ENCODE measurements at regions of chr12 and their contacts with region 1.

Region 1: DNA sequence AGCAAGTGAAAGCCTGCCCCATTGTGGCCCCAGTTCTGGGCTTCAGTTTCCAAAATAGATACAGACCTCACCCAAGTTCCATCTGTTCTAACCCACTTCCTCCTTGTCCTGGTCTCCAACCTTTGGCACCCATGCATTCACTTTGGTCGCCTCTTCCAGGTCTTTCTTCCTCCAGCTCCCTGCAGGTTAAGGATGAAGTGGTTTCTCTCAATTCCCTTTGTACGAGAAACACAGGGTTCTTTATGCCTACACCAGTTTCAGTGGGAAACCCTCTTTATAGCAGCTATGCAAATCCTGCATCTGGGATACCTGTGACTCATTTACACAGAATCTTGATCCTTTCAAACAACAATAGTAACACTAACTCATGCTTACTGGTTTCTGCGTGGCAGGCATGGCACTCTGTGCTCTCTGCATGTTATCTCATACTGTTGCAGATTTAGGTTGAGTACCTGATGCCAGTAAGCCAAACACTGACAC is 110.6 kb upstream of the AMIGO2 start:
- DNase-seq: peak; percentile 63
- H3K4me3 Mint-ChIP-seq: peak overlapping the region; percentile 17
- H3K27ac Mint-ChIP-seq: peak overlapping the region; percentile 80
- H3K4me1 Mint-ChIP-seq: peaks cover 82% of the 10 kb centered on the region
- H3K27me3 Mint-ChIP-seq: no peaks in the 10 kb centered on the region

Region 2: GRCh38 chr12:47079468-47079980 is 110.8 kb before region 1 on chr12 and contains the starts of genes AMIGO2 and PCED1B:
- CTCF ChIA-PET with region 1: interaction called, 7 read pairs
- POLR2A ChIA-PET with region 1: interaction called, 4 read pairs
- intact Hi-C with region 1: loop called (anchors 1 kb)
- DNase-seq: peak; percentile 83
- H3K4me3 Mint-ChIP-seq: peak within 1 kb of the TSS; percentile 99
- H3K27ac Mint-ChIP-seq: peak within 1 kb of the TSS; percentile 92
- H3K4me1 Mint-ChIP-seq: peaks cover 72% of the 10 kb centered on the region
- H3K27me3 Mint-ChIP-seq: no peaks in the 10 kb centered on the region
- total RNA-seq, gene AMIGO2: 12.4 to 13.6 TPM
- total RNA-seq, gene PCED1B: 133 to 136 TPM

Region 3: DNA sequence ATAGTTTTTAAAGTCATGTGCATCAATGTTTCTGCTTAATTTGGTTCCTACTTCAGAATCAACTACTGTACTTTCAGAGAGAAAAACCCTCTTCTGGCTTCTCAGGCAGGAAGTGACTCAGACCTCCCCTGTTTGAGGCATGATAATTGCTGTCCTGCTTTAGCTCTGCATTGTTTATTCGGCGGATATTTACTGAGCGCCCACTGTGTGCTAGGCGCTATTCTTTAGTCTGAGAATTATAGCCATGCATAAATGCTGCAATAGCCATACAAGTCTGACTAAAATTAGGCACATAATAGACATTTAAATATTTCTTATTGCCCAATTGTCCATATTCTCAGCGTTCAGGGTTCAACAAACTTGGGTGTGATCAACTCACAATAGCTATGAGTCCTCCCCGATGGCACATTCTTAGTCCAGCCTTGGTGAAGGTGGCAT is 104.5 kb before region 1 on chr12:
- CTCF ChIA-PET with region 1: no interaction called
- POLR2A ChIA-PET with region 1: interaction called, 3 read pairs
- intact Hi-C with region 1: loop called (anchors 2 kb)
- DNase-seq: peak; percentile 59
- H3K4me3 Mint-ChIP-seq: peak overlapping the region; percentile 47
- H3K27ac Mint-ChIP-seq: peak overlapping the region; percentile 69
- H3K4me1 Mint-ChIP-seq: peaks cover 51% of the 10 kb centered on the region
- H3K27me3 Mint-ChIP-seq: no peaks in the 10 kb centered on the region

Region 4: GRCh38 chr12:47111392-47111778 is 78.9 kb before region 1 on chr12:
- CTCF ChIA-PET with region 1: no interaction called
- POLR2A ChIA-PET with region 1: no interaction called
- intact Hi-C with region 1: loop called (anchors 5 kb)
- DNase-seq: peak; percentile 56
- H3K4me3 Mint-ChIP-seq: no peak overlapping the region
- H3K27ac Mint-ChIP-seq: no peak overlapping the region
- H3K4me1 Mint-ChIP-seq: peaks cover 38% of the 10 kb centered on the region
- H3K27me3 Mint-ChIP-seq: no peaks in the 10 kb centered on the region

Region 5: DNA sequence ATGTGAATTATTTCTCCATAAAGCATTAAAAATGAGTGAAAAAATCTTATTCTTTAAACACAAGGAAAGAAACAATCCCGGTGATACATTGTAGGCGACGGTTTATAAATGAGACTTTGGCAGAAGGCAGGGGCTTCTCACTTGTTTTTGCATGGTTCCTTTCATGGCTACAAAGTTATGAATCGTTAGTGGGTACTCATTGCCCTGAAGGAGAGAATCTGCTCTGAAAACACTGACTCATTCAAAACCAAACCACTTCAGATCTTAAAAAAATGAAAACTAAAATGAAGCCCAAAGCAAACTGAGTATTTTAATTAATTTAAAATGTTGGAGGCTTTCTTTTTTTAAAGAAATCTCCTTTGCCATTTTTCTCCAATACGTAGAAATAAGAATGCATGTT is 69.2 kb before region 1 on chr12:
- CTCF ChIA-PET with region 1: no interaction called
- POLR2A ChIA-PET with region 1: no interaction called
- intact Hi-C with region 1: loop called (anchors 2 kb)
- DNase-seq: no peak
- H3K4me3 Mint-ChIP-seq: no peak overlapping the region
- H3K27ac Mint-ChIP-seq: peak overlapping the region; percentile 94
- H3K4me1 Mint-ChIP-seq: peaks cover 35% of the 10 kb centered on the region
- H3K27me3 Mint-ChIP-seq: no peaks in the 10 kb centered on the region

Region 6: DNA sequence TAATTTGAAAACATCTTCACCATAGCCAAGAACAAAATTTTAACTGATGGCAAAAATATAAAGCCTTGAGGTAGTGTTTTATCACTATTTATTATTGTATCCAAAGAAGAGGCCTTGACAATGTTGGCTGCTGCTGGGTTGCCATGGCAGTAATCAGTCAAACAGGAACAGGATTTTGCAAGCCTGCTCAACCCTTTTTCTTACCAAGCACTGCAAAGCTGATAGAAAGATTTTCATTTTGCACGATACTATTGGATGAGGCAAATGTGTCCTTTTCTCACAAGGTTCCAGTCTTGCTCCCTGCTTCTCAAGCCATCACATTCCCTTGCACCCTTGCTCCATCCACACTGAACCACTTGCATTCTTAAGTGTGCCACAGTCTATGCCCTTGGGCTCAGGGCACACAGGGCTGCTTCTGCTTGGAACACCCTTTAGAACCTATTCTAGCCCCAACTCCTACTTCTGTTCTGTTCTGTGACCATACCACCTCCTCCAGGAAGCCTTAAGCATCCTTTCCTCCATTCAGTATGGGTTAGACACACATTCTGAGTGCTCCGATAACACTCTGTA is 34.1 kb before region 1 on chr12:
- CTCF ChIA-PET with region 1: interaction called, 3 read pairs
- POLR2A ChIA-PET with region 1: no interaction called
- intact Hi-C with region 1: loop called (anchors 5 kb)
- DNase-seq: no peak
- H3K4me3 Mint-ChIP-seq: no peak overlapping the region
- H3K27ac Mint-ChIP-seq: peak overlapping the region; percentile 44
- H3K4me1 Mint-ChIP-seq: peaks cover 40% of the 10 kb centered on the region
- H3K27me3 Mint-ChIP-seq: no peaks in the 10 kb centered on the region

Region 7: GRCh38 chr12:47207340-47207717 is 17.0 kb after region 1 on chr12:
- CTCF ChIA-PET with region 1: interaction called, 12 read pairs
- POLR2A ChIA-PET with region 1: interaction called, 8 read pairs
- intact Hi-C with region 1: loop called (anchors 1 kb)
- DNase-seq: peak; percentile 75
- H3K4me3 Mint-ChIP-seq: peak overlapping the region; percentile 85
- H3K27ac Mint-ChIP-seq: peak overlapping the region; percentile 96
- H3K4me1 Mint-ChIP-seq: peaks cover 80% of the 10 kb centered on the region
- H3K27me3 Mint-ChIP-seq: no peaks in the 10 kb centered on the region

Region 8: GRCh38 chr12:47267571-47267970 is 77.3 kb after region 1 on chr12:
- CTCF ChIA-PET with region 1: no interaction called
- POLR2A ChIA-PET with region 1: no interaction called
- intact Hi-C with region 1: no loop called
- DNase-seq: no peak
- H3K4me3 Mint-ChIP-seq: no peak overlapping the region
- H3K27ac Mint-ChIP-seq: no peak overlapping the region
- H3K4me1 Mint-ChIP-seq: peaks cover 61% of the 10 kb centered on the region
- H3K27me3 Mint-ChIP-seq: no peaks in the 10 kb centered on the region

Region 9: GRCh38 chr12:47296828-47297227 is 106.5 kb after region 1 on chr12:
- CTCF ChIA-PET with region 1: no interaction called
- POLR2A ChIA-PET with region 1: no interaction called
- intact Hi-C with region 1: no loop called
- DNase-seq: no peak
- H3K4me3 Mint-ChIP-seq: no peak overlapping the region
- H3K27ac Mint-ChIP-seq: no peak overlapping the region
- H3K4me1 Mint-ChIP-seq: peaks cover 39% of the 10 kb centered on the region
- H3K27me3 Mint-ChIP-seq: no peaks in the 10 kb centered on the region

Region 10: GRCh38 chr12:47377414-47378221 is 187.3 kb after region 1 on chr12:
- CTCF ChIA-PET with region 1: no interaction called
- POLR2A ChIA-PET with region 1: no interaction called
- intact Hi-C with region 1: no loop called
- DNase-seq: no peak
- H3K4me3 Mint-ChIP-seq: no peak overlapping the region
- H3K27ac Mint-ChIP-seq: peak overlapping the region; percentile 85
- H3K4me1 Mint-ChIP-seq: peaks cover 55% of the 10 kb centered on the region
- H3K27me3 Mint-ChIP-seq: no peaks in the 10 kb centered on the region